ENCODE measurements at regions of chr13 and their contacts with region 1.

Region 1: GRCh38 chr13:69921156-69921555 is 186.5 kb upstream of the ATXN8OS start:
- DNase-seq: no peak
- H3K4me3 ChIP-seq: no peak overlapping the region
- H3K27ac ChIP-seq: no peak overlapping the region
- H3K4me1 ChIP-seq: no peaks in the 10 kb centered on the region
- H3K27me3 ChIP-seq: no peaks in the 10 kb centered on the region
- CTCF ChIP-seq: no peak
- POLR2A ChIP-seq: no peak

Region 2: GRCh38 chr13:69879936-69880335 is 41.2 kb before region 1 on chr13:
- intact Hi-C with region 1: loop called (anchors 2 kb)
- DNase-seq: no peak
- H3K4me3 ChIP-seq: no peak overlapping the region
- H3K27ac ChIP-seq: no peak overlapping the region
- H3K4me1 ChIP-seq: no peaks in the 10 kb centered on the region
- H3K27me3 ChIP-seq: no peaks in the 10 kb centered on the region
- CTCF ChIP-seq: no peak
- POLR2A ChIP-seq: no peak

Measured in breast epithelium (tissue), 4 donors.